ENCODE measurements at regions of chr5 and their contacts with region 1.

Region 1: GRCh38 chr5:90434116-90434714 is 24.7 kb upstream of the CETN3 start:
- DNase-seq: peak; percentile 54
- H3K4me3 Mint-ChIP-seq: no peak overlapping the region
- H3K27ac Mint-ChIP-seq: no peak overlapping the region
- H3K4me1 Mint-ChIP-seq: no peaks in the 10 kb centered on the region
- H3K27me3 Mint-ChIP-seq: peaks cover 15% of the 10 kb centered on the region
- CTCF ChIP-seq: peak; percentile 41

Region 2: GRCh38 chr5:90184764-90185163 is 249.5 kb before region 1 on chr5:
- CTCF ChIA-PET with region 1: no interaction called
- POLR2A ChIA-PET with region 1: no interaction called
- intact Hi-C with region 1: no loop called
- DNase-seq: no peak
- H3K4me3 Mint-ChIP-seq: no peak overlapping the region
- H3K27ac Mint-ChIP-seq: no peak overlapping the region
- H3K4me1 Mint-ChIP-seq: peaks cover 6% of the 10 kb centered on the region
- H3K27me3 Mint-ChIP-seq: no peaks in the 10 kb centered on the region
- CTCF ChIP-seq: no peak

Region 3: GRCh38 chr5:90606539-90606938 is 172.3 kb after region 1 on chr5:
- CTCF ChIA-PET with region 1: interaction called, 4 read pairs
- POLR2A ChIA-PET with region 1: no interaction called
- intact Hi-C with region 1: loop called (anchors 1 kb)
- DNase-seq: peak; percentile 21
- H3K4me3 Mint-ChIP-seq: no peak overlapping the region
- H3K27ac Mint-ChIP-seq: no peak overlapping the region
- H3K4me1 Mint-ChIP-seq: peaks cover 5% of the 10 kb centered on the region
- H3K27me3 Mint-ChIP-seq: peaks cover 87% of the 10 kb centered on the region
- CTCF ChIP-seq: no peak

Region 4: GRCh38 chr5:90638878-90639277 is 204.7 kb after region 1 on chr5:
- CTCF ChIA-PET with region 1: no interaction called
- POLR2A ChIA-PET with region 1: no interaction called
- intact Hi-C with region 1: no loop called
- DNase-seq: no peak
- H3K4me3 Mint-ChIP-seq: no peak overlapping the region
- H3K27ac Mint-ChIP-seq: no peak overlapping the region
- H3K4me1 Mint-ChIP-seq: no peaks in the 10 kb centered on the region
- H3K27me3 Mint-ChIP-seq: peaks cover 57% of the 10 kb centered on the region
- CTCF ChIP-seq: no peak

Region 5: GRCh38 chr5:90709323-90710155 is 275.3 kb after region 1 on chr5:
- CTCF ChIA-PET with region 1: no interaction called
- POLR2A ChIA-PET with region 1: no interaction called
- intact Hi-C with region 1: loop called (anchors 5 kb)
- DNase-seq: peak; percentile 57
- H3K4me3 Mint-ChIP-seq: no peak overlapping the region
- H3K27ac Mint-ChIP-seq: no peak overlapping the region
- H3K4me1 Mint-ChIP-seq: no peaks in the 10 kb centered on the region
- H3K27me3 Mint-ChIP-seq: peaks cover 81% of the 10 kb centered on the region
- CTCF ChIP-seq: peak; percentile 54